GM12878 (cell line): ENCODE measurements at regions of chr1 and their contacts with region 1.

Region 1: GRCh38 chr1:200751717-200752116 is 13.0 kb downstream of the CAMSAP2 start:
- DNase-seq: no peak
- ATAC-seq: peak; percentile 92
- H3K4me3 ChIP-seq: no peak overlapping the region
- H3K27ac ChIP-seq: no peak overlapping the region
- H3K4me1 ChIP-seq: no peaks in the 10 kb centered on the region
- H3K27me3 ChIP-seq: no peaks in the 10 kb centered on the region
- CTCF ChIP-seq: no peak
- EP300 ChIP-seq: no peak
- POLR2A ChIP-seq: no peak
- RAD21 ChIP-seq: no peak

Region 2: GRCh38 chr1:199898654-199899053 is 853.1 kb before region 1 on chr1:
- CTCF ChIA-PET with region 1: no interaction called
- POLR2A ChIA-PET with region 1: no interaction called
- RAD21 ChIA-PET with region 1: no interaction called
- SMC1A ChIA-PET with region 1: no interaction called
- in situ Hi-C with region 1: no loop called
- intact Hi-C with region 1: no loop called
- DNase-seq: no peak
- ATAC-seq: no peak
- H3K4me3 ChIP-seq: no peak overlapping the region
- H3K27ac ChIP-seq: no peak overlapping the region
- H3K4me1 ChIP-seq: no peaks in the 10 kb centered on the region
- H3K27me3 ChIP-seq: no peaks in the 10 kb centered on the region
- CTCF ChIP-seq: no peak
- EP300 ChIP-seq: no peak
- POLR2A ChIP-seq: no peak
- RAD21 ChIP-seq: no peak

Region 3: GRCh38 chr1:200639790-200640669 is 111.7 kb before region 1 on chr1:
- CTCF ChIA-PET with region 1: no interaction called
- POLR2A ChIA-PET with region 1: no interaction called
- RAD21 ChIA-PET with region 1: no interaction called
- SMC1A ChIA-PET with region 1: no interaction called
- in situ Hi-C with region 1: no loop called
- intact Hi-C with region 1: no loop called
- DNase-seq: no peak
- ATAC-seq: peak; percentile 99
- H3K4me3 ChIP-seq: no peak overlapping the region
- H3K27ac ChIP-seq: peak overlapping the region; percentile 78
- H3K4me1 ChIP-seq: peaks cover 9% of the 10 kb centered on the region; the same call in 1 of the 2 replicates
- H3K27me3 ChIP-seq: no peaks in the 10 kb centered on the region
- CTCF ChIP-seq: no peak
- EP300 ChIP-seq: no peak; a peak in 1 of 4 replicates
- POLR2A ChIP-seq: no peak
- RAD21 ChIP-seq: no peak

Region 4: GRCh38 chr1:200738740-200739498 is 12.8 kb before region 1 on chr1 and contains the start of gene CAMSAP2:
- CTCF ChIA-PET with region 1: interaction called, 4 read pairs
- POLR2A ChIA-PET with region 1: no interaction called
- RAD21 ChIA-PET with region 1: interaction called, 3 read pairs
- SMC1A ChIA-PET with region 1: interaction called, 17 read pairs
- in situ Hi-C with region 1: no loop called
- intact Hi-C with region 1: no loop called
- DNase-seq: no peak
- ATAC-seq: peak; percentile 75
- H3K4me3 ChIP-seq: peak within 1 kb of the TSS; percentile 99
- H3K27ac ChIP-seq: peak within 1 kb of the TSS; percentile 88
- H3K4me1 ChIP-seq: peaks cover 5% of the 10 kb centered on the region; the same call in 1 of the 2 replicates
- H3K27me3 ChIP-seq: no peaks in the 10 kb centered on the region
- CTCF ChIP-seq: no peak
- EP300 ChIP-seq: no peak
- POLR2A ChIP-seq: peak; percentile 71
- RAD21 ChIP-seq: no peak
- polyA plus RNA-seq, gene CAMSAP2: 5.0 to 6.4 TPM